Dendritic cell treated with granulocyte-macrophage colony-stimulating factor and Interleukin-4, amounts not matched to agents 40 ng/mL and 50 ng/mL, for 4 days (primary cell): ENCODE measurements at regions of chr15 and their contacts with region 1.

Region 1: GRCh38 chr15:98177924-98178592 is 217.6 kb downstream of the ARRDC4 start:
- H3K4me3 Mint-ChIP-seq: no peak overlapping the region
- H3K27ac Mint-ChIP-seq: no peak overlapping the region
- H3K4me1 Mint-ChIP-seq: no peaks in the 10 kb centered on the region
- H3K27me3 Mint-ChIP-seq: peaks cover 26% of the 10 kb centered on the region

Region 2: DNA sequence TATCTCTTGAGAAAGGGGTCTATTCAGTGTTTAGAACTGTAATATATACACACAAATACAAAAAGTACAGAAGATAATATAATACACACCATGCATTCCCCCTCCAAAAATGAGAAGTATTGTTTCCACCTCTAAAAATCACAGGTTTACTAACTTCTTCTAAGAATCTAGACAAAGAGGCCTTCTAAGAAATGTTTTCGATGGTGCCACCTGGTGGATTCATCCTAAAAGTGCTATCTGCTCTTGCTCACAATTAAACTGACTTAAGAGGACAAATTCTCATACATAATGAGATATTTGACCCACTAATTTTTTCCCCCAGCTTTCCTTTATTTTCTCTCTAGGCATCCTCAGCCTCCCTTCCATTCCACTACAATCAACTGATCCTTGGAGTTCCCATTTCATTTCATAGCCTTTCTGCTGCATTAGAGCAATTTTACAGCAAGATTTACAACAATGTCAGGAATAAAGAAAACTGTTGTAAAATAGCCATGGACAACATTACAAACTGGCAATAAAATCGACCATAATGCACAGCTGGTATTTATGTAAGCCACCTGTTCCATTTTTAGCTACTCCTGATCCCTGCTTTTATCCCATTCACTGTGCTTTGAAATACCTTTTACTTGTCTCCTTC is 92.9 kb before region 1 on chr15:
- intact Hi-C with region 1: loop called (anchors 5 kb)
- H3K4me3 Mint-ChIP-seq: no peak overlapping the region
- H3K27ac Mint-ChIP-seq: no peak overlapping the region
- H3K4me1 Mint-ChIP-seq: peaks cover 47% of the 10 kb centered on the region
- H3K27me3 Mint-ChIP-seq: peaks cover 2% of the 10 kb centered on the region